Heart left ventricle (tissue), 16 donors: ENCODE measurements at regions of chr1 and their contacts with region 1.

Region 1: DNA sequence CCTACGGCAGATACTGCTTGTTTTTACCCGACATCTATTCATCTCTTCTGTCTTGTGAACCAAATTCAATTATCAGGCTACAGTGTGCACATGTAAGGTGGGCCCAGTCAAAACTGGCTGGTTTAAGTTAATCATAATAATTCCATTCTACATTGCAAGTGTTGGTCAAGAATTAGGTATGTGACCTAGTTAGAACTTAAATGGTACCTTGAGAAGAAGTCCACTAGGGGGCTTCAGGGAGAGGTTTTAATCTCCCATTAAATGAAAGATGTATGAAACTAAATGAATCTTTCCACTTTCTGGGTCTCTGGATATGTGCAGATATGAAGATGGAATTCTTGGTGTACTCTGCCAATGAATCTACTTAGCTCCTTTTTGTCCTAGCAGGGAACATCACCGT is 187.1 kb downstream of the CDC42BPA start:
- DNase-seq: no peak
- ATAC-seq: peak in 2 of 4 donors; percentile 41 to 55
- H3K4me3 ChIP-seq: no peak overlapping the region
- H3K27ac ChIP-seq: no peak overlapping the region
- H3K4me1 ChIP-seq: peaks cover 0 to 12% (median 0%) of the 10 kb centered on the region in 12 donors
- H3K27me3 ChIP-seq: no peaks in the 10 kb centered on the region
- CTCF ChIP-seq: peak; percentile 30 to 66 (median 50)
- POLR2A ChIP-seq: no peak

Region 2: GRCh38 chr1:227449051-227449450 is 317.9 kb after region 1 on chr1:
- intact Hi-C with region 1: loop called in 1 of 10 experiments (anchors 5 kb)
- DNase-seq: no peak
- ATAC-seq: peak in 2 of 4 donors; percentile 14 to 24
- H3K4me3 ChIP-seq: no peak overlapping the region
- H3K27ac ChIP-seq: no peak overlapping the region
- H3K4me1 ChIP-seq: peaks cover 0 to 11% (median 2%) of the 10 kb centered on the region in 12 donors
- H3K27me3 ChIP-seq: peaks cover 0 to 14% (median 0%) of the 10 kb centered on the region in 9 donors
- CTCF ChIP-seq: peak in 11 of 12 donors; percentile 14 to 50 (median 32)
- POLR2A ChIP-seq: no peak